Right cardiac atrium (tissue), 5 donors: ENCODE measurements at regions of chr2 and their contacts with region 1.

Region 1: GRCh38 chr2:38315707-38316333 is 61.3 kb downstream of the ATL2 start:
- DNase-seq: no peak
- ATAC-seq: peak; percentile 60 to 72
- H3K4me3 ChIP-seq: no peak overlapping the region
- H3K27ac ChIP-seq: no peak overlapping the region
- H3K4me1 ChIP-seq: no peaks in the 10 kb centered on the region
- H3K27me3 ChIP-seq: no peaks in the 10 kb centered on the region

Region 2: DNA sequence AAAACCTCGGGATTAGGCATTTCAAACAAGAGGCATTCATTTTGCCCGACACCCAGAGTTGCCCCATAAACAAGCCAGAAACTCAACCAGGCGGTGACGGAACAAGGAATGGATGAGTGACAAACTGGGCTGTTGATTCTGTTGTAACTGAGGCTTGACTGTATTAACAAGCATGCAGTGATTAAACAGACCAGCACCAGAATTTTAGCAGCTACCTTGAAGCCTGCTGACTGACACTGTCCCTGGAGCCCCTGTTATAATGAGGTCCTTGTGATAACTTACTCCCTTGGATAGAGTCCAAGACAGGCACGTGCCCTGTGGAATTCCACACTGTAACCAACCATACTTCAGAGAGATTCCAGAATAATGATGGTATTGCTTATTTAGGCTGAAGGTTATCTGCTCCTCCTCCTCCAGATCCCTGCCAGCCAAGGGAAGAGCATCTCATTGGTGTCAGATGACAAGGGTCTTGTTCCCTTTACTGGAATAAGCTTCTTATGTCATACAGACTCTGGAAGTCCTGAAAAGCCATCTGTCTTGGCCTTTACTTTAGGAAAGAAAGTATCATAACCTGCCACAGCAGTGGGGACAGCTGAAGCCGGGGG is 487.8 kb before region 1 on chr2:
- intact Hi-C with region 1: no loop called
- DNase-seq: no peak
- ATAC-seq: peak; percentile 34 to 54
- H3K4me3 ChIP-seq: no peak overlapping the region
- H3K27ac ChIP-seq: peak overlapping the region; percentile 83
- H3K4me1 ChIP-seq: peaks cover 10% of the 10 kb centered on the region
- H3K27me3 ChIP-seq: no peaks in the 10 kb centered on the region

Region 3: DNA sequence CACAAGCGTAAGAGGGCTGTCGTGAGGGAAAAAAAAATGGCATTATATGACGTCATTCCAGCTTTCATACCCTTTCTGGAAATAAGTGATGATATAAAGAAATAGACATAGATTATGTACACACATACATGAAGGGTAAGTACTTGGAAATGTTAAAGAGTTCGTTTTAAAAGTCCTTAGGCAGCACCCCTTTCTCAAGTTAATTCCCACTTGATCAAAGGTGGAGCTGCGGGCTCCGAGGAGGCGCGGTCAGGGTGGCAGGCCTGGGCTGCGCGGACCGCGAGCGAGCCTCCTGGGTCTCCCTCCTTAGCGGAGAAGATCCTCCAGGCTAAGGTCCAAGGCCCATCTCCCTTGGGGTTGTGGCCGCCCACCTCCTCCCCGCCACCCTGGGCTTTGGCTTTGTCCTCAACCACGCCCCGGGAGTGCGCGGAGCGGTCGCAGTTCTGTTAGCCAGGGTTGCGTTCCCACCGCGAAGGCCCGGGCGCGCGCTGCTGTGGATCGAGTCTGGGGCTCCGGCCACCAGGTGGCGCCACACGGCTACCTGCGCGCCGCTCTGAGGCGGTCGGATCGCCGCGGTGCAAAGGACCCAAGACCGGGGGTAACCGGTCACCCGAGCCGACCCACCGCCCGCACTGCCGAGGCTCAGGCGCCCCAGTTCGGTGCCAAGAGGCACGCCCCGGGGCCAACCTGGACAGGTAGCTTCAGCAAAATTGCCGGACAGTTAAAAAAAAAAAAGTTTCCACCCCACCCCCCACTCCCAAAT is 220.1 kb after region 1 on chr2:
- intact Hi-C with region 1: loop called in 1 of 4 experiments (anchors 10 kb)
- DNase-seq: peak; percentile 88 to 96 (median 93)
- ATAC-seq: peak; percentile 94 to 95
- H3K4me3 ChIP-seq: peak overlapping the region; percentile 56
- H3K27ac ChIP-seq: no peak overlapping the region
- H3K4me1 ChIP-seq: no peaks in the 10 kb centered on the region
- H3K27me3 ChIP-seq: no peaks in the 10 kb centered on the region

Region 4: DNA sequence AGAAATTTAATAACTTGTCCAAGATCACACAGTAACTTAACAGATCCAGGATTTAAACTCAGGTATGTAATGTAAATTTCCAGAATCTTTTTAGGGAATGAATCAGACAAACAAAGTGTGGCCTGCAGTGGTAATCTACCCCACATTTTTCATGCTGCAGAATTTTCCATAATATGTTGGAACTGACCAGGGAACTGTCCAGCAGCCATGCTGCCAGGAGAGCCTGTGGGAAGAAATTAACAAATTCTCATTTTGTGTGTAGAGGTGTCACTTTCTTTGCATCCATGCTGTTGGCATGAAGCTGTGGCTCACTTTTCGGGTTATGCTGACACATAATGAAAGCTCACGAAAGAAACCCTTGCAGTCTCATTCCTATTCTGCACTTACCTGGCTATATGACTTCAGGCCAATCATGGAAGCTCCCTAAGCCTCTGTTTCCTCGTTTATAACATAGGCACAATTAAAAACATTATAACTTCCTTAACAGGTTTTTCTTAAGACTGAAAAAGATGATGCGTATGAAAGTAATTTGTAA is 873.2 kb after region 1 on chr2:
- intact Hi-C with region 1: no loop called
- DNase-seq: no peak
- ATAC-seq: no peak
- H3K4me3 ChIP-seq: no peak overlapping the region
- H3K27ac ChIP-seq: no peak overlapping the region
- H3K4me1 ChIP-seq: no peaks in the 10 kb centered on the region
- H3K27me3 ChIP-seq: no peaks in the 10 kb centered on the region